HepG2 (cell line): ENCODE measurements at regions of chr5 and their contacts with region 1.

Region 1: GRCh38 chr5:178838695-178839685 is 20.8 kb upstream of the ZNF354B start:
- DNase-seq: peak; percentile 38
- ATAC-seq: peak; percentile 97
- H3K4me3 ChIP-seq: no peak overlapping the region
- H3K27ac ChIP-seq: no peak overlapping the region
- H3K4me1 ChIP-seq: no peaks in the 10 kb centered on the region
- H3K27me3 ChIP-seq: 0 out of 5 replicates have a peak, but pooled peaks cover 0 to 4% of the 10 kb centered on the region in 2 experiments
- CTCF ChIP-seq: peak; percentile 93
- EP300 ChIP-seq: no peak
- POLR2A ChIP-seq: no peak
- RAD21 ChIP-seq: peak; percentile 81

Region 2: GRCh38 chr5:178279725-178280438 is 559.1 kb before region 1 on chr5:
- CTCF ChIA-PET with region 1: interaction called, 10 read pairs
- POLR2A ChIA-PET with region 1: no interaction called
- in situ Hi-C with region 1: loop called (anchors 10 kb)
- intact Hi-C with region 1: loop called (anchors 5 kb)
- DNase-seq: peak; percentile 59
- ATAC-seq: peak; percentile 95
- H3K4me3 ChIP-seq: no peak overlapping the region
- H3K27ac ChIP-seq: no peak overlapping the region
- H3K4me1 ChIP-seq: peaks cover 19% of the 10 kb centered on the region
- H3K27me3 ChIP-seq: peaks cover 2 to 38% of the 10 kb centered on the region in 2 experiments; a peak in 4 of 5 replicates
- CTCF ChIP-seq: peak; percentile 99
- EP300 ChIP-seq: no peak
- POLR2A ChIP-seq: no peak
- RAD21 ChIP-seq: peak; percentile 97

Region 3: DNA sequence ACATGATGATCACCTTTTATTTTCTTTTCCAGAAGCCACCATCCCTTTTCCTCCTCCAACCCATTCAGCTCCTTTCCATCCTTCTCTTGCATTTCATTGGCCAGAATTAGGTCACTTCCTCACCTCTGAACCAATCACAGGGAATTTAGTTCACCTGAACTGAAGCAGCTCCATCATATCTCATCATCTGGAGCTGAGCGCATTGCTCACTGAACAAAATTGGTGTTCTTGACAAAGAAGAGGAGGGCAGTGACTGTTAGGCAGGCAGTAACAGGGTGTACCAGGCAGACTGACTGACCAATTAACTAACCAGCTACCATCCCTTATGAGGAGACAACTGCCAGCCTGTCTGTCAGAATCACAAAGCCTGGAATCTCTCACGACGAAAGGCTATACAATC is 106.7 kb before region 1 on chr5:
- CTCF ChIA-PET with region 1: interaction called, 18 read pairs
- POLR2A ChIA-PET with region 1: no interaction called
- in situ Hi-C with region 1: no loop called
- intact Hi-C with region 1: loop called (anchors 2 kb)
- DNase-seq: no peak
- ATAC-seq: no peak
- H3K4me3 ChIP-seq: no peak overlapping the region
- H3K27ac ChIP-seq: no peak overlapping the region
- H3K4me1 ChIP-seq: peaks cover 8% of the 10 kb centered on the region; the same call in 1 of the 2 replicates
- H3K27me3 ChIP-seq: no peaks in the 10 kb centered on the region
- CTCF ChIP-seq: no peak
- EP300 ChIP-seq: no peak
- POLR2A ChIP-seq: no peak
- RAD21 ChIP-seq: no peak

Region 4: GRCh38 chr5:178793151-178793550 is 45.8 kb before region 1 on chr5:
- CTCF ChIA-PET with region 1: interaction called, 3 read pairs
- POLR2A ChIA-PET with region 1: no interaction called
- in situ Hi-C with region 1: no loop called
- intact Hi-C with region 1: loop called (anchors 1 kb)
- DNase-seq: peak; percentile 21
- ATAC-seq: peak; percentile 85
- H3K4me3 ChIP-seq: no peak overlapping the region
- H3K27ac ChIP-seq: no peak overlapping the region
- H3K4me1 ChIP-seq: no peaks in the 10 kb centered on the region
- H3K27me3 ChIP-seq: peaks cover 0 to 17% of the 10 kb centered on the region in 2 experiments; a peak in 3 of 5 replicates
- CTCF ChIP-seq: peak; percentile 77
- EP300 ChIP-seq: no peak
- POLR2A ChIP-seq: no peak
- RAD21 ChIP-seq: peak; percentile 58